ENCODE measurements at regions of chr9 and their contacts with region 1.

Region 1: DNA sequence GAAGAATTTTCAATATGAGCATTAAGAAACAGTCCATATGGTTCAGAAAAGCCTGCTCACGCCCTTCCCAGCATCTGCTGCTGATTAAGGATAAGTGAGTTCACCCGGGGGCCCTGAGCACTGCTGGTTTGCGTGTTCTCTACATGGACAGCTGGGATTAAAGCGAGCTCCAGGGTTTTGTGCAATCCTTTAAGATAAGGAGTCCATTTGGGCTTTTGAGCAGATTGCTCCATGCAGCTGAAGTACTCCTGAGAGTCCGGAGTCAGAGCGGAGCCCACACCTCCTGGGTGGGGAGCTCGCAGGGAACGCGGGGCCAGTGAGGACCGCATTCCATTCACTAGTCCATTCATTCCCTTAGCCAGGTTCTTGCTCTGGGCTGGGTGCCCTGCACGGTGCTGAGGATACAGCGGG is 149.3 kb upstream of the COL5A1 start:
- DNase-seq: peak; percentile 54 to 63
- ATAC-seq: peak; percentile 68 to 91 (median 78)
- H3K4me3 ChIP-seq: no peak overlapping the region
- H3K27ac ChIP-seq: peak overlapping the region in 5 of 10 donors; percentile 36 to 58 (median 44)
- H3K4me1 ChIP-seq: peaks cover 0 to 29% (median 4%) of the 10 kb centered on the region in 9 donors
- H3K27me3 ChIP-seq: peaks cover 0 to 53% (median 20%) of the 10 kb centered on the region in 7 donors
- CTCF ChIP-seq: no peak

Region 2: GRCh38 chr9:134544388-134545214 is 52.3 kb after region 1 on chr9:
- intact Hi-C with region 1: loop called in 1 of 10 experiments (anchors 10 kb)
- DNase-seq: no peak
- ATAC-seq: peak; percentile 45 to 76 (median 62)
- H3K4me3 ChIP-seq: no peak overlapping the region
- H3K27ac ChIP-seq: peak overlapping the region in 9 of 10 donors; percentile 7 to 75 (median 37)
- H3K4me1 ChIP-seq: peaks cover 0 to 28% (median 4%) of the 10 kb centered on the region in 9 donors
- H3K27me3 ChIP-seq: peaks cover 0 to 45% (median 7%) of the 10 kb centered on the region in 7 donors
- CTCF ChIP-seq: no peak

Region 3: DNA sequence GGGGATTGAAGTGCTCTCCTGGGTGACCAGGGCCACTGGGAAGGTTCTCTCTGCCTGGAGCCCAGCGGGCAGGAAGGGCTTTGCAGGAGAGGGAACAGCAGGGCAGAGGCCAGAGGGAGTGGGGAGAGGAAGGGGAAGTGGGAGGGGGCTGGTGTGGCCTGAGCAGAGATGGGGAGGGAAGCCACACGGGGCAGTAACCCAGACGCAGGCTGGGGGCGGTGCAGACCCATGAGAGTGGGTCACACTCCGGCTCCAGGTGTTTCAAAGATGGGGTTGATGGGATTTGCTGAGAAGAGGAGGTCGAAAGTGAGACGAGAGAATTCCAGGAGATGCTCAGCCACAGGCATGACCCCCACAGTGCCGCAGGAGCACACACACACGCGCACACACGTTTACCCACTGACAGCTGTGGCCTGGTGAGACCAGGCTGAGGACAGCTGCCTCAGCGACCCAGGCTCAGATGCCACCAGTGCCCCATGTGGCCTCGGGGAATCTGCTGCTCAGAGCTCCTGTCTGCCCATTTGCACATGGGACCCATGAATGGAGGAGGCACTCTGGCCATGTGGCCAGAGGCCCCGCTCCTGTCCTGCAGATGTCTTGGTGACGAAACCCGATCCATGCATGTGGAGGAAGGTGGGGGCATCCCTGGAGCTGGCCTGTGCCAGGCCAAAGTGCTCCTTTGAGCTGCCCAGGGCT is 355.6 kb after region 1 on chr9:
- intact Hi-C with region 1: no loop called
- DNase-seq: no peak
- ATAC-seq: peak in 5 of 8 donors; percentile 22 to 65 (median 37)
- H3K4me3 ChIP-seq: no peak overlapping the region
- H3K27ac ChIP-seq: no peak overlapping the region
- H3K4me1 ChIP-seq: peaks cover 0 to 3% (median 0%) of the 10 kb centered on the region in 9 donors
- H3K27me3 ChIP-seq: no peaks in the 10 kb centered on the region
- CTCF ChIP-seq: no peak